ENCODE measurements at regions of chr22 and their contacts with region 1.

Region 1: GRCh38 chr22:46013460-46014416 is 36.8 kb upstream of the WNT7B start:
- DNase-seq: peak; percentile 80
- H3K4me3 ChIP-seq: peak overlapping the region; percentile 47
- H3K27me3 ChIP-seq: no peaks in the 10 kb centered on the region
- CTCF ChIP-seq: peak; percentile 81

Region 2: DNA sequence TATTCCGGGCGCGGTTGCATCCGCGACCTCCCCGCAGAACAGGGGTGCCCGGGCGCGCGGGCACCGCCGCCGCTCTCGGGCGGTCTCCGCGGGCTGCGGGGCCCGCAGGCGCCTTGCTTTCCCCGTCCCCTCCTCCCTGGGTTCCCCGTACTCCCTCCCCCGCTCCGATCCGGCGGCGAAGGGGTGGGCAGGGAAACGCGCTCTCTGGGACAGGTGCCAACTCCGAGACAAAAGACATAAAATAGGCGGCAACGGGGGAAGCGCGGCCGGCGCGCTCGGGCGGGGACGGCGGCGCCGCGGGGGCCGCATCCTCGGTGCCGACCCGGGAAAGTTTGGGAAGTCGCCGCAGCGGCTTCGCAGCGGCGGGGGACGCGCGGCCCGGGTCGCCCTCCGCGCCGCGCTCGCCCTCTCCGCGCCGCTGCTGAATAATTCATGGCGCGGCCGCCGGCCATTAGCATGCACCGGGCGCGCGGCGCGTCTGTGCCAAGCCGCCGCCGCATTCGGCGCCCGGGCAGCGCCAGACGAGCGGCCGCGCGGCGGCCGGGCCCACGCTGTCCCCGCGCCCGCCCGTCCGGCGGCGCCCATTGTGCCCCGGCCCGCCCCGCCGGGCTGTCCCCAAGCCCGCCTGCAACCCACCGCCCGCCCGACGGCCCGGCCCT is 57.8 kb after region 1 on chr22:
- CTCF ChIA-PET with region 1: interaction called, 77 read pairs
- POLR2A ChIA-PET with region 1: no interaction called
- DNase-seq: no peak
- H3K4me3 ChIP-seq: peak overlapping the region; percentile 98
- H3K27me3 ChIP-seq: no peaks in the 10 kb centered on the region
- CTCF ChIP-seq: no peak

Region 3: DNA sequence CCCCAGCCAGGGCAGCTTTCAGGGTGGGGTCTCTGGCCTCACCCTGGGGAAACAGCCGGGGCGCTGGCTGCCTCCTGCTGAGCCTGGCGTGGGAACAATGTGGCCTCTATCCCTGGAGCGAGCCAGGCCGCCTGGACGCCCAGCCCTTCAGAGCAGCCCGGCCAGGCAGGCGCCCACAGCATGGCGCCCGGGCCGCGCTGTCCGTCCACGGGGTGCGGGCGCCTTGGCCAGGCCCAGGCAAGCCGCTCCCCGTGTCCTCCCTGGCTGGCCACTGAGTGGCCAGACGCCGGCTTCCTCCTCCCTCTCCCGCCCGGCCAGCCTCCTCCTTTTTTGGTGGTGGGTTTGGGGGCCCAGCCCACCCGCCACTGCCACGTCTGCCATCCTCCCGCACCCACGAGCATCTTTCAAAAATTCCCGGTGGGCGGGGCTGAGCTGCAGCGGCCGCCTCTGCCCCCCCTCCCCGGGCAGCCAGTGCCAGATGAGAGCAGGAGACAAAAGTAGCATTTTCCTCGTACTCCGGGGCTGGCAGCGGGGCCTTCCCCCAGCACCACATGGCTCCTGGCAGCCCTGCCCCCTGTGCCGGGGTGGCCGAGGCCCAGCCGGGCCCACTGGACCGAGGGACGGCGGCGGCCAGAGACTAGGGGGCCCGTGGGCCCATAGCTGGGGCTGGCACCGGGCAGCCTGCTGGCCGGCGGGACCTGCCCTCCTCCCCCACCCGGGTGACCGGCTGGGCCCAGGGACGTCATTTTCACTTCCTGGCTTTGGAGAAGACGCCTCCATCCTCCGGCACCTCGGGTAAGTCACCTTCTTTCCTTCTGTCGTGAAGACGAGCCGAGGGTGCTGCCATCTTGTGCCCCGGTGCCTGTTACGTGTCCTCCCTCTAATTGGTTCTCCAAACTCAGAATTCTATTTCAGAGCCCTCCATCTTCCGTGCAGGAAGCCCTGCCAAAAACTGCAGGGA is 66.4 kb after region 1 on chr22:
- CTCF ChIA-PET with region 1: interaction called, 77 read pairs
- POLR2A ChIA-PET with region 1: no interaction called
- DNase-seq: no peak
- H3K4me3 ChIP-seq: peak overlapping the region; percentile 98
- H3K27me3 ChIP-seq: no peaks in the 10 kb centered on the region
- CTCF ChIP-seq: no peak